ENCODE measurements at regions of chr2 and their contacts with region 1.

Region 1: GRCh38 chr2:96913398-96914202 is 43.7 kb upstream of the SEMA4C start:
- DNase-seq: peak; percentile 29 to 87 (median 55)
- ATAC-seq: peak; percentile 84
- H3K4me3 ChIP-seq: peak overlapping the region; percentile 42
- H3K4me3 Mint-ChIP-seq: peak overlapping the region; percentile 82
- H3K27ac ChIP-seq: peak overlapping the region; percentile 64 to 68
- H3K27ac Mint-ChIP-seq: peak overlapping the region; percentile 84
- H3K4me1 ChIP-seq: peaks cover 71% of the 10 kb centered on the region
- H3K4me1 Mint-ChIP-seq: peaks cover 89% of the 10 kb centered on the region
- H3K27me3 ChIP-seq: no peaks in the 10 kb centered on the region
- H3K27me3 Mint-ChIP-seq: no peaks in the 10 kb centered on the region
- CTCF ChIP-seq: no peak

Region 2: GRCh38 chr2:96868555-96869280 is 44.9 kb before region 1 on chr2:
- CTCF ChIA-PET with region 1: no interaction called
- POLR2A ChIA-PET with region 1: interaction called, 24 read pairs
- intact Hi-C with region 1: loop called in 1 of 2 experiments (anchors 1 kb)
- DNase-seq: peak; percentile 25 to 78 (median 55)
- ATAC-seq: peak; percentile 24
- H3K4me3 ChIP-seq: peak overlapping the region; percentile 80
- H3K4me3 Mint-ChIP-seq: peak overlapping the region; percentile 92
- H3K27ac ChIP-seq: peak overlapping the region; percentile 66 to 69
- H3K27ac Mint-ChIP-seq: peak overlapping the region; percentile 85
- H3K4me1 ChIP-seq: peaks cover 55% of the 10 kb centered on the region
- H3K4me1 Mint-ChIP-seq: peaks cover 49% of the 10 kb centered on the region
- H3K27me3 ChIP-seq: no peaks in the 10 kb centered on the region
- H3K27me3 Mint-ChIP-seq: no peaks in the 10 kb centered on the region
- CTCF ChIP-seq: peak; percentile 72

Region 3: GRCh38 chr2:96874118-96874831 is 39.3 kb before region 1 on chr2:
- CTCF ChIA-PET with region 1: no interaction called
- POLR2A ChIA-PET with region 1: interaction called, 24 read pairs
- intact Hi-C with region 1: loop called (anchors 1 to 2 kb)
- DNase-seq: peak in 2 of 14 experiments; percentile 70 to 73
- ATAC-seq: no peak
- H3K4me3 ChIP-seq: no peak overlapping the region
- H3K4me3 Mint-ChIP-seq: peak overlapping the region; percentile 62
- H3K27ac ChIP-seq: no peak overlapping the region
- H3K27ac Mint-ChIP-seq: peak overlapping the region; percentile 75
- H3K4me1 ChIP-seq: peaks cover 33% of the 10 kb centered on the region
- H3K4me1 Mint-ChIP-seq: peaks cover 45% of the 10 kb centered on the region
- H3K27me3 ChIP-seq: no peaks in the 10 kb centered on the region
- H3K27me3 Mint-ChIP-seq: no peaks in the 10 kb centered on the region
- CTCF ChIP-seq: no peak

Region 4: GRCh38 chr2:96891491-96892333 is 21.9 kb before region 1 on chr2:
- CTCF ChIA-PET with region 1: no interaction called
- POLR2A ChIA-PET with region 1: interaction called, 14 read pairs
- intact Hi-C with region 1: no loop called
- DNase-seq: peak in 12 of 14 experiments; percentile 18 to 84 (median 48)
- ATAC-seq: peak; percentile 75
- H3K4me3 ChIP-seq: no peak overlapping the region
- H3K4me3 Mint-ChIP-seq: peak overlapping the region; percentile 32
- H3K27ac ChIP-seq: no peak overlapping the region
- H3K27ac Mint-ChIP-seq: peak overlapping the region; percentile 80
- H3K4me1 ChIP-seq: peaks cover 61% of the 10 kb centered on the region
- H3K4me1 Mint-ChIP-seq: peaks cover 76% of the 10 kb centered on the region
- H3K27me3 ChIP-seq: no peaks in the 10 kb centered on the region
- H3K27me3 Mint-ChIP-seq: no peaks in the 10 kb centered on the region
- CTCF ChIP-seq: no peak

Region 5: DNA sequence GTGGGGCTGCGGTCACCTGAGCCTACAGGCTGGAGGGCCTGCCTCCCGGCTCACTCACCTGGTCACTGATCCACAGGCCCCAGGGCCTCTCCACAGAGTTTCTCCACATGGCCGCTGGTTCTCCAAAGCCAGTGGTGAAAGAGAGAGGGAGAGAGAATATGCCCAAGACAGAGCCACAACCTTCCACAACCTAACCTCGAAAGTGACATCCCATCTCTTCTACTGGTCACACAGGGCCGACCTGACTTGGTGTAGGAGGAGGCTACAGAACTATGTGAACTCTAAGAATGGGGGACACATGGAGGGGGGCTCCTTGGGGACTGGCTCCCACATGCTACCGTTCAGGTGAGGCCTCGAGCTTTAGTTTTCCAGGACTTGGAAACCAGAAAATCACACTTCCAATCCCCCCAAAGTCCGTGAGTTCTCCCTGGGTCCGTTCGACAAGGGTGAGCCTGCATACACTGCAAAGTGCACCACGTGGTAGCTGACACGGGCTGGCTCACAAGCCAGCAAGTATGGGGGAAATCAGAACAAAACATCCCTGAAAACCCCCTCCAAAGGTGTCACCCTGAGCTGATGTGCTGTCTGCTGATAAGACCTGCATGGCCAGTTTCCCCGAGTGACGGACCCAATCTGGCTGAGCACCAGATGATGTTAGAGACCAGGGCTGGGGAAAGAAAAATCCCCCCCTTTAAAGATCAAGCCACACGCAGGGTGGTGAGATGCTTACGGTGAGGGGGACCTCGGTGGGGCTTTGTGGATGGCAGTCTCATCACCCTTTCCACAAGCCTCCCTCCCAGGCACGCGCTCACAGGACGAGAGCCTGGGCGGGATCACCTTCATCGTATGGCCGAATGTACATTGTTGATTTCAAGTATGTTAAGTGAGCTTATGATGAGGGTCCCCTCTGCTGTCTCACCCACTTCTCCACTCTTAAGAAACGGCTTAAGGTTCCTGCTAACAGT is 10.5 kb after region 1 on chr2:
- CTCF ChIA-PET with region 1: no interaction called
- POLR2A ChIA-PET with region 1: interaction called, 29 read pairs
- intact Hi-C with region 1: loop called in 1 of 2 experiments (anchors 2 kb)
- DNase-seq: peak in 9 of 14 experiments; percentile 20 to 58 (median 39)
- ATAC-seq: peak; percentile 71
- H3K4me3 ChIP-seq: peak overlapping the region; percentile 48
- H3K4me3 Mint-ChIP-seq: peak overlapping the region; percentile 79
- H3K27ac ChIP-seq: peak overlapping the region; percentile 26 to 51
- H3K27ac Mint-ChIP-seq: peak overlapping the region; percentile 92
- H3K4me1 ChIP-seq: peaks cover 28% of the 10 kb centered on the region
- H3K4me1 Mint-ChIP-seq: peaks cover 37% of the 10 kb centered on the region
- H3K27me3 ChIP-seq: no peaks in the 10 kb centered on the region
- H3K27me3 Mint-ChIP-seq: no peaks in the 10 kb centered on the region
- CTCF ChIP-seq: no peak

Region 6: GRCh38 chr2:96977631-96978195 is 64.1 kb after region 1 on chr2:
- CTCF ChIA-PET with region 1: no interaction called
- POLR2A ChIA-PET with region 1: no interaction called
- intact Hi-C with region 1: no loop called
- DNase-seq: peak in 5 of 14 experiments; percentile 40 to 60 (median 51)
- ATAC-seq: peak; percentile 91
- H3K4me3 ChIP-seq: no peak overlapping the region
- H3K4me3 Mint-ChIP-seq: no peak overlapping the region
- H3K27ac ChIP-seq: no peak overlapping the region
- H3K27ac Mint-ChIP-seq: no peak overlapping the region
- H3K4me1 ChIP-seq: no peaks in the 10 kb centered on the region
- H3K4me1 Mint-ChIP-seq: peaks cover 12% of the 10 kb centered on the region
- H3K27me3 ChIP-seq: no peaks in the 10 kb centered on the region
- H3K27me3 Mint-ChIP-seq: no peaks in the 10 kb centered on the region
- CTCF ChIP-seq: no peak

Measured in CD4-positive, alpha-beta T cell (primary cell).